Motor neuron (in vitro differentiated cells): ENCODE measurements at regions of chr4 and their contacts with region 1.

Region 1: DNA sequence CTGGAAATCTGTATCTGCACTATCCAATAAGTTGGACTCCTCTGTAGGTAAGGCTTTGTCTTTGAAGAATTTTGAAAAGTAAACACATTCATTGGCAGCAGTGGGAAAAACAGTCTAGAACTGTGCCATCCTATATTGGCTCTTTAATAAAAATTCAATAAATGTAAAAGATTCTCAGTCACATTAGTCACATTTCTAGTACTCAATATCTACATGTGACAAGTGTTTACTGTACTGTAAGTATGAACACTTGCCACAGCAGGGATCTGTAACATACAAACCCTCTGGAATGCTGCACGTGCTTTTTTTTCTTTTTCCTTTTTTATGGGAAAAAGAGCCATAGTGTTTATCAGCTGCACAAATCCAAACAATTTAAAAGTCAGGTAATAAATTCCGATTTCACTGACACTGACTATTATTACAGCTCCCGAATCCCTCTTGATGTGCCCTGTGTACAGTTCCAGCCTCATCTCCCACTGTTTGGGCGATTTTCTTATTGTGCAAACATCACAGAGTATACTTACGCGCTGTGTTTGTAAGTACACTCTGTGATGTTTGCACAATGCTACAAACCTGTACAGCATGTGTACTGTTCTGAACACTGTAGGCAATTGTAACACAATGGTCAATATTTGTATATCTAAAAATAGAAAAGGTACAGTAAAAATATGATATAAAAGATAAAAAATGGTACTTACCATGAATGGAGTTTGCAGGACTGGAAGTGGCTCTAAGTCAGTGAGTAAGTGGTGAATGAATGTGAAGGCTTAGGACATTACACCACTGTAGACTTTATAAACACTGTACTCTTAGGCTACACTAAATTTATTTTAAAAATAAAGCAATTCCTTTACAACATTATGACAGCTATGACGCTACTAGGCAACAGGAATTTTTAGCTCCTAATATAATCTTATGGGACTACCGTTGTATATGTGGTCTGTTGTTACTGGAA is 8.7 kb downstream of the PYURF start:
- ATAC-seq: peak in 3 of 8 experiments; percentile 9 to 69 (median 34)
- H3K4me3 ChIP-seq: no peak overlapping the region
- H3K27ac ChIP-seq: no peak overlapping the region
- H3K4me1 ChIP-seq: no peaks in the 10 kb centered on the region

Region 2: GRCh38 chr4:88211473-88212252 is 303.2 kb before region 1 on chr4:
- in situ Hi-C with region 1: loop called in 6 of 9 experiments (anchors 10 to 25 kb)
- ATAC-seq: peak in 7 of 8 experiments; percentile 33 to 69 (median 52)
- H3K4me3 ChIP-seq: no peak overlapping the region
- H3K27ac ChIP-seq: no peak overlapping the region
- H3K4me1 ChIP-seq: no peaks in the 10 kb centered on the region

Region 3: GRCh38 chr4:88225232-88226105 is 289.4 kb before region 1 on chr4:
- in situ Hi-C with region 1: loop called in 4 of 9 experiments (anchors 10 to 25 kb)
- ATAC-seq: peak in 1 of 8 experiments; percentile 28
- H3K4me3 ChIP-seq: no peak overlapping the region
- H3K27ac ChIP-seq: no peak overlapping the region
- H3K4me1 ChIP-seq: no peaks in the 10 kb centered on the region

Region 4: GRCh38 chr4:88378691-88379559 is 135.9 kb before region 1 on chr4 and contains the start of gene HERC6:
- in situ Hi-C with region 1: loop called in 3 of 9 experiments (anchors 10 to 25 kb)
- ATAC-seq: peak; percentile 93 to 98 (median 96)
- H3K4me3 ChIP-seq: peak within 1 kb of the TSS; percentile 38 to 66 (median 57)
- H3K27ac ChIP-seq: no peak within 1 kb of the TSS
- H3K4me1 ChIP-seq: no peaks in the 10 kb centered on the region
- total RNA-seq, gene HERC6: 0.38 to 32.4 (median 2.5) TPM